Spleen (tissue), 13 donors: ENCODE measurements at regions of chr12 and their contacts with region 1.

Region 1: GRCh38 chr12:133080368-133081158 is at the start of gene ZNF140:
- DNase-seq: peak; percentile 99
- H3K4me3 ChIP-seq: peak within 1 kb of the TSS; percentile 46 to 82 (median 65)
- H3K27ac ChIP-seq: peak within 1 kb of the TSS; percentile 94 to 99 (median 98)
- H3K4me1 ChIP-seq: peaks cover 0 to 23% (median 15%) of the 10 kb centered on the region in 6 donors
- H3K27me3 ChIP-seq: no peaks in the 10 kb centered on the region
- CTCF ChIP-seq: peak in 10 of 11 experiments; percentile 14 to 71 (median 58)
- POLR2A ChIP-seq: peak in 1 of 3 donors; percentile 24
- total RNA-seq, gene ZNF140: 16.8 to 25.0 (median 18.2) TPM

Region 2: DNA sequence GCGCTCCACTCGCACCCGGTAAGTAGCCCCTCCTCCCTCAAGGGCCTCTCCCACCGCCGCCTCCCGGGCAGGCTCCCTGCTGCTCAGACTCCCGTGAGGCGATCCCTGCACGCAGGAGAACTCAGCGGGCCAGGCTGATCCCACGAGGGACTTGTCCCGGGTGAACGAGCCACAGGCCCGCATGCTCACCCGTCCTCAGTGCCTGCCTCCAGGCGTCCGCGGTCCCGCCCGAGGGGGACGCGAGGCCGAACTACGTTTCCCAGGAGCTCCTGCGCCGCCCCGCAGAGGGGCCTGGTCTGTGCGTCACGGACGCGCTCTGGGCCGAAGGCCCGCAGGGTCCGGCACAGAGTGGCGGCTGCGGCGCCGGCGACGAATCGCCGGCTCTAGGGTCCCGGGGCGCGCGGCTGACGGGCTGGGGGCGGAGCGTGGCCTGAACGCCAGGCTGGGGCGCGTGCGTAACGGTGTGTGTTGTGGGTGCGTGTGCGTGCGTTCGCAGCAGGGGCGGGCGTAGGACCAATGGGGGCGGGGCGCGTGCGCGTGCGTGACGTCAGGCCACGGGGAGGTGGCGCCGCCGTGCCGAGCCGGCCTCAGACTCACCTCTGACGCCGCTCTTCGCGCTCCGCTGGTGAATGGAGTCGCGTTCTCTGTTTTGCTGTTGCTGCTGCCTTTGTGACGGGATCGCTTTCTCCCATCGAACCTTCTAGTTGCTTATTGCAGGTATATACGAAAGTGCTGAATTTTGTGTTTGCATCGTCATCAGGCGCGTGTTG is 49.7 kb after region 1 on chr12 and contains the starts of genes ZNF10 and ZNF891:
- intact Hi-C with region 1: loop called (anchors 5 kb)
- DNase-seq: peak; percentile 99
- H3K4me3 ChIP-seq: peak within 1 kb of the TSS; percentile 59 to 91 (median 76)
- H3K27ac ChIP-seq: peak within 1 kb of the TSS; percentile 94 to 100 (median 99)
- H3K4me1 ChIP-seq: peaks cover 0 to 25% (median 14%) of the 10 kb centered on the region in 6 donors
- H3K27me3 ChIP-seq: no peaks in the 10 kb centered on the region
- CTCF ChIP-seq: peak in 4 of 11 experiments; percentile 8 to 25 (median 18)
- POLR2A ChIP-seq: peak; percentile 13 to 73 (median 69)
- total RNA-seq, gene ZNF10: 7.7 to 22.1 (median 9.3) TPM
- total RNA-seq, gene ZNF891: 2.3 to 5.8 (median 3.2) TPM